Astrocyte of the cerebellum (primary cell): ENCODE measurements at regions of chr6 and their contacts with region 1.

Region 1: DNA sequence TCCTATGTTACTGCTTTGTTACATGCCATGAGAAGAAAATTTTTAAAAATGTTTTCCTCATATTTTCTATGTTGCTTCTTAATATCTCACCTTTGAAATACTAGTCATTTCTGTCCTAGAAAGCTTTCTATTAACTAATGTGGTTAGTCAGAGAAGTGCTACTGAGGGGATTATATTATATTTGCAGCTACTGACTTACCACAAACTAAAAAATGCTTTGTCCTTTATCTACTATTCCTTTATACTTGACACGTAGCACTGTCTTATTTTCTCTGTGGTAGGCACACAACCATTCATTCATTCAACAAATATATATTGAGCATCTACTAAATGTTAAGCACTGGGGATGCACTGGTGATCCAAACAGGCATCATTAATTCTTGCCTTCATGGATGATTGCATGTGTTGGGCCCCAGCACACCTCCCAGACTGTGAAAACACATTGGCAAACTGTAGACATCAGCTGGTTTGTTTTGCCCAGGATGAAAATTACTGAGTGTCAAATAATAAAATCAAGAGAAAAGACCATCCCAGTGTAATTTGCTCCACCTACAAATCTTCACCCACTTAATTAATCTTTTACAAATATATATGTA is 10.7 kb upstream of the MLIP start:
- DNase-seq: no peak
- H3K4me3 ChIP-seq: no peak overlapping the region
- CTCF ChIP-seq: no peak

Region 2: DNA sequence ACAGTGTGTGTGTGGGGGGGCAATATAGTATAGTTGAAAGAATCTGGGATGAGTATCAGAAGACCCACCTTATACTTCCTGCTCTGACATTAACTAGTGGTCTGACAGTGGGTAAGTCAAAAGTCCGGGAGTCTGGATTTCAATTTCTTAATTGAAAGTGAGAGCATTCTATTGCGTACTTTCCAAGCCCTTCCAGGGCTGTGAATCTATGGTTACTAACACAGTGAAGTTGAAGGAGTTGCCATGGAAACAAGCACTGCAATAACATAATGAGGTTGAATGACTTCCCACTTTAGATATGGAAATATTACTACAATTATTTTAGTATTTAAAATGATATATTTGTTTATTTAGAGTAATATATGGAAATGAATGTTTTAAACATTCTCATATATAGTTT is 91.0 kb after region 1 on chr6:
- in situ Hi-C with region 1: loop called (anchors 5 kb)
- DNase-seq: peak; percentile 19
- H3K4me3 ChIP-seq: no peak overlapping the region
- CTCF ChIP-seq: no peak